SK-N-SH (cell line): ENCODE measurements at regions of chr14 and their contacts with region 1.

Region 1: GRCh38 chr14:58166005-58166983 is 14.3 kb upstream of the ARMH4 start:
- DNase-seq: peak; percentile 67
- H3K4me3 ChIP-seq: no peak overlapping the region; a peak in 1 of 4 replicates
- H3K27ac ChIP-seq: no peak overlapping the region
- H3K4me1 ChIP-seq: peaks cover 3 to 4% of the 10 kb centered on the region in 2 experiments; a peak in 1 of 4 replicates
- H3K27me3 ChIP-seq: no peaks in the 10 kb centered on the region
- CTCF ChIP-seq: peak; percentile 92
- EP300 ChIP-seq: no peak
- RAD21 ChIP-seq: peak; percentile 69

Region 2: DNA sequence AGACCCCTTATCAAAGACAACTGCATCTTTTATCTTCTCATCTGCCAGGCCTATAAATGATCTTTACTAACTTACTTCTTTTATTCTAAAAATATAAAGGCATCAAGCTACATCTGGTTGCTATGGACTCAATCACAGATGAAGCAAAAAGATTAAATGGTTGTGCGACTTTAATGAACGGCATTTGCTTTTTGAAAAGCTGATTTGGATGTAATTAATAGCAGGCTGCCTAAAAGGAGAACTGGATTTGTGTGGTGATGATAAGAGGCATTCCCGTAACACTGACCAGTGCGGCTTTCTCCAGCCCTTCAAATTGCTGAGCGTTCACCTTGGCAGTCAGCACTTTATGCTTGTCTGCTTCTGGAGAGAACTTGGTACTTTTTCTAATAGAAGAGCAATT is 118.1 kb before region 1 on chr14:
- CTCF ChIA-PET with region 1: no interaction called
- POLR2A ChIA-PET with region 1: no interaction called
- DNase-seq: peak; percentile 16
- H3K4me3 ChIP-seq: no peak overlapping the region
- H3K27ac ChIP-seq: no peak overlapping the region
- H3K4me1 ChIP-seq: peaks cover 0 to 3% of the 10 kb centered on the region in 2 experiments; a peak in 2 of 4 replicates
- H3K27me3 ChIP-seq: peaks cover 20% of the 10 kb centered on the region; the same call in 1 of the 2 replicates
- CTCF ChIP-seq: no peak
- EP300 ChIP-seq: no peak
- RAD21 ChIP-seq: no peak

Region 3: GRCh38 chr14:58151133-58152013 is 14.9 kb before region 1 on chr14:
- CTCF ChIA-PET with region 1: interaction called, 10 read pairs
- POLR2A ChIA-PET with region 1: no interaction called
- DNase-seq: peak; percentile 27
- H3K4me3 ChIP-seq: peak overlapping the region; percentile 58 to 63
- H3K27ac ChIP-seq: no peak overlapping the region
- H3K4me1 ChIP-seq: peaks cover 0 to 8% of the 10 kb centered on the region in 2 experiments; a peak in 2 of 4 replicates
- H3K27me3 ChIP-seq: peaks cover 58% of the 10 kb centered on the region
- CTCF ChIP-seq: no peak
- EP300 ChIP-seq: no peak
- RAD21 ChIP-seq: no peak